Natural killer cell (primary cell): ENCODE measurements at regions of chr17 and their contacts with region 1.

Region 1: DNA sequence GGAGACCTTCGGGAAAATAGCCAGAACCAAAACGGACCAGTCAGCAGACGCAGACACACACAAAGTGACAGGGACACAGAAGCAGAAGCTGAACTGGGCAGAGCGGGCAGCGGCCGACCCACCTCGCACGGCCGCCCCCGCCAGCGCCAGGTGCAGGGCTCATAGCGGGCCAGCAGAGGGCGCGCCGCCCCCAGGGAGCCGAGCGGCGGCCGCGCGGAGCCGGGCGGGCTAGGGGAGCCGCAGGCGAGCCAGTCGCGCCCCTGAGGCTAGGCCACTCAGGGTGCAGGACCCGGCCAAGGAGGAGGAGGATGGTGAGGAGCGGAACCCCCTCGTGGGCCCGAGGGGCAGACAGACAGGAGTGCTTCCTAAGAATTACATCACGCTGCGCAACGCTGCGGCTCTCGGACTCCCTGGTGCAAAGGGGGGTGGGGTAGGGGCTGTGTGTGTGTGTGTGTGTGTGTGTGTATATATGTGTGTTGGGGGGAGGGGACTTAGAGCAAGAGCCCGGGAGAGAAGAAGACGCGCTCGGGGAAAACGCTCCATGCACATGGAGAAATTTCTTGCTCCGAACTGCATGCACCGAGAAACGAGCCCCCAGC is 913 bp upstream of the NOG start:
- DNase-seq: peak; percentile 63 to 82
- ATAC-seq: peak; percentile 85 to 90 (median 87)
- H3K4me3 ChIP-seq: no peak overlapping the region
- H3K4me3 Mint-ChIP-seq: peak overlapping the region; percentile 71
- H3K27ac ChIP-seq: no peak overlapping the region
- H3K27ac Mint-ChIP-seq: no peak overlapping the region
- H3K4me1 ChIP-seq: peaks cover 35% of the 10 kb centered on the region
- H3K4me1 Mint-ChIP-seq: peaks cover 13 to 19% of the 10 kb centered on the region in 2 donors
- H3K27me3 ChIP-seq: peaks cover 44% of the 10 kb centered on the region
- H3K27me3 Mint-ChIP-seq: peaks cover 52 to 56% of the 10 kb centered on the region in 2 donors
- CTCF ChIP-seq: peak; percentile 92

Region 2: GRCh38 chr17:56681561-56682266 is 89.1 kb after region 1 on chr17:
- intact Hi-C with region 1: loop called (anchors 10 kb)
- DNase-seq: peak in 1 of 2 donors; percentile 38
- ATAC-seq: peak; percentile 57 to 75 (median 74)
- H3K4me3 ChIP-seq: no peak overlapping the region
- H3K4me3 Mint-ChIP-seq: no peak overlapping the region
- H3K27ac ChIP-seq: no peak overlapping the region
- H3K27ac Mint-ChIP-seq: no peak overlapping the region
- H3K4me1 ChIP-seq: peaks cover 47% of the 10 kb centered on the region
- H3K4me1 Mint-ChIP-seq: peaks cover 21% of the 10 kb centered on the region in 2 donors
- H3K27me3 ChIP-seq: peaks cover 67% of the 10 kb centered on the region
- H3K27me3 Mint-ChIP-seq: peaks cover 60 to 62% of the 10 kb centered on the region in 2 donors
- CTCF ChIP-seq: no peak

Region 3: GRCh38 chr17:56715613-56716357 is 123.2 kb after region 1 on chr17:
- intact Hi-C with region 1: loop called (anchors 1 kb)
- DNase-seq: peak; percentile 59 to 88
- ATAC-seq: peak; percentile 83 to 98 (median 90)
- H3K4me3 ChIP-seq: no peak overlapping the region
- H3K4me3 Mint-ChIP-seq: no peak overlapping the region
- H3K27ac ChIP-seq: no peak overlapping the region
- H3K27ac Mint-ChIP-seq: no peak overlapping the region
- H3K4me1 ChIP-seq: no peaks in the 10 kb centered on the region
- H3K4me1 Mint-ChIP-seq: no peaks in the 10 kb centered on the region
- H3K27me3 ChIP-seq: peaks cover 6% of the 10 kb centered on the region
- H3K27me3 Mint-ChIP-seq: peaks cover 32 to 62% of the 10 kb centered on the region in 2 donors
- CTCF ChIP-seq: peak; percentile 82

Region 4: GRCh38 chr17:56779898-56780733 is 187.5 kb after region 1 on chr17:
- intact Hi-C with region 1: loop called (anchors 1 kb)
- DNase-seq: peak; percentile 84 to 92
- ATAC-seq: peak; percentile 98 to 100 (median 99)
- H3K4me3 ChIP-seq: peak overlapping the region; percentile 2
- H3K4me3 Mint-ChIP-seq: peak overlapping the region; percentile 89
- H3K27ac ChIP-seq: no peak overlapping the region
- H3K27ac Mint-ChIP-seq: peak overlapping the region in 1 of 2 donors; percentile 72
- H3K4me1 ChIP-seq: peaks cover 10% of the 10 kb centered on the region
- H3K4me1 Mint-ChIP-seq: peaks cover 18 to 19% of the 10 kb centered on the region in 2 donors
- H3K27me3 ChIP-seq: peaks cover 16% of the 10 kb centered on the region
- H3K27me3 Mint-ChIP-seq: peaks cover 49 to 58% of the 10 kb centered on the region in 2 donors
- CTCF ChIP-seq: peak; percentile 98